Posterior vena cava (tissue), 2 donors: ENCODE measurements at regions of chr6 and their contacts with region 1.

Region 1: GRCh38 chr6:3186974-3187382 is 29.6 kb upstream of the TUBB2A start:
- DNase-seq: no peak

Region 2: GRCh38 chr6:3162565-3163247 is 24.3 kb before region 1 on chr6:
- intact Hi-C with region 1: loop called in 1 of 2 experiments (anchors 1 kb)
- DNase-seq: peak; percentile 89

Region 3: DNA sequence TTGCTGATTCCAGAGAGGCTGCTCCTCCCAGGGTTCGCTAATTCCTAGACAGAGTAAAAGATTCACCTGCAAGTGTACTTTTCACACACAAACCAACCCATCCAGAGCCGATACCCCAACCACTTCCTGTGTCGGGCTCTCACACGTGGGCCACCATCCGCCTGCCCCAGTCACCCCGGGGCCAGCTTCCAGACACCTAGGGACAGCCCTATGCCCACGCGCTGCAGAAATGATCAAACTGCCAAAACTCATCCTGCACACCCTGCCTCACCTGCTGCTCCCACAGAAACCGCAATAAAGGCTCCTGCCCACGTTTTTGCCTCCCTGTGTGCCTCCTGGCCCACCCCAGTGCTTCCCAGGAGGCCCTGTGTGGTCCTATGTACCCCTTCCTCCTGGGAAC is 131.2 kb after region 1 on chr6:
- intact Hi-C with region 1: loop called in 1 of 2 experiments (anchors 5 kb)
- DNase-seq: peak; percentile 35